T-cell (primary cell): ENCODE measurements at regions of chr12 and their contacts with region 1.

Region 1: DNA sequence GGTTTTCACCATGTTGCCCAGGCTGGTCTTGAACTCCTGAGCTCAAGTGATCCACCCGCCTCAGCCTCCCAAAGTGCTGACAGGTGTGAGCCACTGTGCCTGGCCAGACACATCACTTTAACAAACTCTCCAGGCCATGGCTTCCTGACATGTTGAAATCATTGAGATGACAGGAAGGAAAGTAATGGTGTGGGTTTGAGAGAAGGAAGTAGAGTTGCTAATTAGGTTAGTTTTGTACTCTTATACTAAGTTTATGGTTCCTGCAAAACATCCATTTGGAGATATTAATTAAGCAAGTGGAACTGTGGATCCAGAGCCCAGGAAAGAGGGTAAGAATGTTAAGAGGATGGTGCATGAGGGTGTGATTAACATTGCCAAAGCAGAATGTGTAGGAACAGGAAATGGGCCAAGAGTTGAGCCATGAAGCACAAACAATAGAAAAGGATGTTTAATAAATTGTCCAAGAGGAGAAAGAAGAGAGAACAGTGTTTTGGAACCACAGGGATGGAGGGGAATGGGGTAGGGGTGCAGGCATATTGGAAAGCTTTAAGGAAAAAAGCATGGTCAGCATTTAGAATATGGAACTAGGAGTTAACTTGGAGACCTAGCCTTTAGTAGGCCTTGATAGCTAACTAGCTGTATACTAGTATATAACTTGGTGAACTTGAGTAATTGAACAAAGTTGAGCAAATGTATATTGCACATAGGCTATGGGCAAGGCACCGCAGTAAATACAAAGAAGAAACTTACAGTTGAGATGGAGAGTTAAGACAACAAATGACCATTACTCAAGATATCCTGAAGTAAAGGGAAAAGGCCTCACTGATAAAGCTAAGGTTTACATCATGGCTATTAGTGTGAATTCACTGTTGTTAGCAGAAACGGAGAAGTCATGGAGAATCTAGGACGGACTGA is 91.3 kb upstream of the DNM1L start:
- DNase-seq: no peak
- ATAC-seq: no peak
- H3K4me3 ChIP-seq: no peak overlapping the region
- H3K4me3 Mint-ChIP-seq: peak overlapping the region in 1 of 3 donors; percentile 1
- H3K27ac ChIP-seq: no peak overlapping the region
- H3K27ac Mint-ChIP-seq: peak overlapping the region in 1 of 2 donors; percentile 56
- H3K4me1 ChIP-seq: peaks cover 6 to 16% of the 10 kb centered on the region in 2 experiments
- H3K4me1 Mint-ChIP-seq: peaks cover 32 to 41% (median 34%) of the 10 kb centered on the region in 3 donors
- H3K27me3 ChIP-seq: no peaks in the 10 kb centered on the region
- H3K27me3 Mint-ChIP-seq: no peaks in the 10 kb centered on the region

Region 2: GRCh38 chr12:32545423-32545980 is 42.3 kb before region 1 on chr12:
- CTCF ChIA-PET with region 1: no interaction called
- POLR2A ChIA-PET with region 1: no interaction called
- DNase-seq: no peak
- ATAC-seq: no peak
- H3K4me3 ChIP-seq: no peak overlapping the region
- H3K4me3 Mint-ChIP-seq: no peak overlapping the region
- H3K27ac ChIP-seq: no peak overlapping the region
- H3K27ac Mint-ChIP-seq: no peak overlapping the region
- H3K4me1 ChIP-seq: no peaks in the 10 kb centered on the region
- H3K4me1 Mint-ChIP-seq: peaks cover 0 to 2% (median 0%) of the 10 kb centered on the region in 3 donors
- H3K27me3 ChIP-seq: no peaks in the 10 kb centered on the region
- H3K27me3 Mint-ChIP-seq: peaks cover 0 to 2% of the 10 kb centered on the region in 2 donors

Region 3: DNA sequence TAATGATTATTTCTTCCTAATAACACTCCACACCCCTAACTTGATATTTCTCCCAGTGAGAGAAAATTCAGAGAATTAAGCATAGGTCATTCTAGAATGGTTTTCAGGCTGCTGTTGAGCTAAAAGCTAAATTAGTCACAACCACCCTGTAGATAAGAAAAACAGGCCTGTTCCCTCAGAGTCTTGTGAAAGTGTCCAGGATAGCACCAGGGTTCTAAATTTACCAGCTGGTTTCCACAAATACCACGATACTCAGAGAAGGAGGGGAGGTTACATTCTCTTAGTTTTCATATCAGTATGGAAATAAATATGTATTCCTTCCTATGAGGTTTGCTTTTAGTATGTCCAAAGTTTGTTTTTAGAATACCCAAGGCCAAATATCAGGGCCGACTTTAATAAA is 233.9 kb after region 1 on chr12:
- CTCF ChIA-PET with region 1: interaction called in 1 of 2 experiments, 13 read pairs
- POLR2A ChIA-PET with region 1: no interaction called
- DNase-seq: no peak
- ATAC-seq: no peak
- H3K4me3 ChIP-seq: no peak overlapping the region
- H3K4me3 Mint-ChIP-seq: no peak overlapping the region
- H3K27ac ChIP-seq: no peak overlapping the region
- H3K27ac Mint-ChIP-seq: no peak overlapping the region
- H3K4me1 ChIP-seq: no peaks in the 10 kb centered on the region
- H3K4me1 Mint-ChIP-seq: no peaks in the 10 kb centered on the region
- H3K27me3 ChIP-seq: peaks cover 0 to 6% of the 10 kb centered on the region in 2 experiments
- H3K27me3 Mint-ChIP-seq: peaks cover 3 to 10% of the 10 kb centered on the region in 2 donors